ENCODE measurements at regions of chr9 and their contacts with region 1.

Region 1: DNA sequence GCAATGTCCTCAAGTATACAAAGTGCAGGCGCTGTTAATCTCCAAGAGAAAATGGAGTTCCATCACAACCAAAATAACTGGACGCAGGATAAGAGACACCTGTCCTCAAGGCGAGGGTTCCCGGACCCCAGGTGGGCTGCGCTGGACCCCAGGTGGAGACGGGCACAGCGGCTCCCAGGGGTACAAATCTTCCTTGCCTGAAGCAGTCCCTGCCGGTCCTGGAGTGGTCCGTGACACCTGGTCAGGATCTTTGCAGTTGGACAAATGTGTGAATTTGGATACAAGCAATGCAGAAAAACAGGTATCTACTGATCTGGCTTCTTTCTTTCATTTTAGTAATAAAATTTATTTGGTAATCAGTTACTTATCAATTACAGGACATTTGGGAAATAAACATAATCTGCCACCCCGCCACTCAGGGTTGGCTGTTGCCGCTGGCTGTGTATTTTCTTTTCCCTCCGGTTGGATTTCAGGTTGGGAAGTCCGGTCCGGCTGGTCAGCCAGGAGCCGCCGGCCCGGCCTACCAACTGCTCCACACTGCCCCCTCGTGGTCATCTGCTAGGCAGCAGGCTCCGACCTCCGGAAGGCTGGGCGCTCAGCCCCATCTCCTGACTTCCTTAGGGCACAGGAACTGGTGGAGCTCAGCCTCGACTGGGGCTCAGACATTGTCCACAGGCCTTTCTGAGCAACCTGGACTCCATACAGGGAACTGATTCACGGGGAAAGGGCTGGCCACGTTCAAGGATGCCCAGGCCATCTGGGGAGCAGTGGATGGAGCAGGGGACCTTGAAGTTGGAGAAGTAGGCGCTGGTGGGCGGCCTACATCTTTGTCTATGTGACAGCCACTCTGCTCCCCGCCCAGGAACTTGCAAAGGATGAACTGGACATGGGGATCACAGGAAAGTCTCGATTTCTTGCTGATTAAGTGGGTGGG is 43.4 kb downstream of the NXNL2 start:
- DNase-seq: peak; percentile 38 to 44
- ATAC-seq: peak; percentile 58 to 74
- H3K4me3 ChIP-seq: peak overlapping the region in 1 of 4 donors; percentile 39
- H3K27ac ChIP-seq: no peak overlapping the region
- H3K4me1 ChIP-seq: no peaks in the 10 kb centered on the region
- H3K27me3 ChIP-seq: no peaks in the 10 kb centered on the region
- CTCF ChIP-seq: peak; percentile 59 to 92 (median 82)
- POLR2A ChIP-seq: no peak

Region 2: DNA sequence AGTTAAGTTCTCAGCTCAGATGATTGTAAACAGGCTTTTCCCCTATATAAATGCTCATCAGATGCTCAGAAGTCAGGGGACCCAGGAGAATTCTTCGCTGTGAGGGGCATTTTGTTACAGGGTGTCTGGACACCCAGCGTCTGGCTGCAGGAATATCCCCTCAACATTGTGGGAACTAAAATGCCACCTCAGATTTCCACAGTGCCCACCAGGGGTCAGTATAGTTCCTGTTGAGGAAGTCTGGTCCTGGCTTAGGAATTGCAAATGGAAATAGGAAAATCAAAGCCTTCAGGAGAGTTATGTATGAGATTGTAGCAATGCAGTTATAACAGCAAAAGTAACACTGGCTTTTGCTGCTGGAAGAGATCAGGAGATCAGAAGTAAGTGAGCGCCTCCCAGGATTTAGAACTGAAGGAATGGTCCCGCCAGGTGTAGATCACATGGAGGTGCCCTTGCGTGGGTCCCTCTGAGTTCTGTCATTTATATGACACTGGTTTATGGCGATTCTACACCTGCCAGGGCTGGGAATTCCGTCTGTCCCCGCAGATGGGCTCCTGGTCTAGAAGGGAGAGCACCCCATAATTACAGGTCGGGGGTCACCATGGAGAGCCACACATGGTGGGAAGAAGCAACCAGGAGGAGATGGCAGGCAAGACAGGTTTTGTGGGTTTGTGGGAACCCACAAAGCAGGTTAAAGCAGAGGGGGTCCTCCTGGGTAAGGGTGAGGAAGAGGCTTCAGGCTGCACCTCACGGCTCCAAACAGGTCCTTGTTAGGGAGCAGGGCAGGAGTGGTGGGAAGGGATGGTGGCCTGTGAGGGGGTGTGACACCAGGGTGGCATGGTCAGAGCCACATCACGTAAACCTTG is 899.5 kb before region 1 on chr9:
- in situ Hi-C with region 1: no loop called
- intact Hi-C with region 1: loop called (anchors 5 kb)
- DNase-seq: peak in 1 of 2 donors; percentile 34
- ATAC-seq: no peak
- H3K4me3 ChIP-seq: no peak overlapping the region
- H3K27ac ChIP-seq: no peak overlapping the region
- H3K4me1 ChIP-seq: no peaks in the 10 kb centered on the region
- H3K27me3 ChIP-seq: no peaks in the 10 kb centered on the region
- CTCF ChIP-seq: peak; percentile 56 to 78 (median 70)
- POLR2A ChIP-seq: no peak

Region 3: DNA sequence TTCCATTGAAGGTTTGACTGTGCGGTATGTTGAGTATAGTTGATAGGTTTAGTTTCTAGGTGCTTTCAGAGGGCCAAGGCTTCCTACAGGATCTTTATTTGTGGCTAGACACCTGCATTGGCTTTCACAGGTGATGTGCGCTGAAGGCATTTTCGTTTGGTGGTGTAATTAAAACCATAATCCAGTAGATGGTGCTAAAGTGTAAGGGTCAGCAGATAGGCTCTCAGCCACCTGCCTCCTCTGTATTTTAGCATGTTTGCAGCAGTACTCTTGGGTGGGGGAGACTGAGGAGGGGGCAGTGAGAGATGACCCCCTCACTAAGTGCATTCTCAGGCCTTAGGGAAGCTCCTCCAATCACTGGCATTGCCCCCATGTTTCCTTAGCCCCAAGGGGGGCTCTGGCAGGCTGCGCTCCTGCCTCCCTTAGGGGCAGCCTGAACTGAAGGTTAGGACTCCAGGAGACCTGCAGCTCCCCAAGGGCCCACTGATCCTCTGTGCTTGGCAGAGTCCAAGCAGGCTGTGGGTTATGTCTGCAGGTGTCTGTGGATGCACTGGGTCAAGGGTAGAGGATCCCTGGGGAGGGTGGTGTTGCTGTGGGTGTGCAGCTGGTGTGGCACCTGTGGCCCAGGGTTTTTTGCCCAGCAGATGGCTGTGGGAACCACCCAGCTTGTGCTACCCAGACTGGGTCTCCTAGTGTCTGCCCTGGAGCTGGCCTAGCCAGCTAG is 627.5 kb before region 1 on chr9:
- in situ Hi-C with region 1: no loop called
- intact Hi-C with region 1: loop called (anchors 5 kb)
- DNase-seq: no peak
- ATAC-seq: no peak
- H3K4me3 ChIP-seq: no peak overlapping the region
- H3K27ac ChIP-seq: no peak overlapping the region
- H3K4me1 ChIP-seq: no peaks in the 10 kb centered on the region
- H3K27me3 ChIP-seq: peaks cover 0 to 5% (median 0%) of the 10 kb centered on the region in 3 donors
- CTCF ChIP-seq: peak in 2 of 5 experiments; percentile 25 to 31
- POLR2A ChIP-seq: no peak

Region 4: DNA sequence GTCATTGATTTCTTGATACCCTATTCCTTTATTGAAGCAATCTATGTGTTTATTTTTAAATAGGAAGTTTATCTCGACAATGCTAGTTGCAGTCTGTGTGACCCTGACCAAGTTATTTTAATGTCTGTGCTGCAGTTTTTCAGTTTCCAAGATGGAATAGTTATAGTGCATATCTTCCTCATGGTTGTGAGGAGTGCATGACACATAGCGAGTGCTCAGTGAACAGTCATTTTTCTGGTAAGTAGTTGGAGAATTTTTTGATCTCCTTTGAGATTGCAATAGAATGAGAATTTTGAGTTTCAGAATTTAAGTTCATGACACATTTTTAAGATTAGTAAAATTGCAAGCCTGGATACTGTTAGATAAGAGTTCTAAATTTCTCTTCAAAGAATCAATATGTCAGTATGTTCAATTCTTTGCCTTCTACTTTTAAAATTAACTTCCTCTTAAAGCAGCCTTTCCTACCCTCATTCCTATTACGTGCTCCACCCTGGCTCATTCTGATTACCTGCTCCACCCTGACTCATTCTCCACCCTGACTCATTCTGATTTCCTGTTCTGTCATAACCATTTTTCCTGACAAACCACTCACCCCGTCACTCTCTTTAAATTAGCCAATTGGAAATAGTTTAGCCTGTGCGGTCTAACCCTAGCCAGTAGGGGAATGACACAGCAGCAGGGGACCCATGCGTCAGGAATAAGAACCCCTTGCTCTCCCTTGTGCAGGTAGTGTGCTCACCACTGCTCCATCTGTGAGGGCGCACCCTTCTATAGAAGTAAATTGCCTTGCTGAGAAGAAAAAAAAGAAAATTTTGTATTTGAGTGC is 159.5 kb before region 1 on chr9:
- in situ Hi-C with region 1: no loop called
- intact Hi-C with region 1: no loop called
- DNase-seq: no peak
- ATAC-seq: no peak
- H3K4me3 ChIP-seq: no peak overlapping the region
- H3K27ac ChIP-seq: no peak overlapping the region
- H3K4me1 ChIP-seq: no peaks in the 10 kb centered on the region
- H3K27me3 ChIP-seq: no peaks in the 10 kb centered on the region
- CTCF ChIP-seq: no peak
- POLR2A ChIP-seq: no peak